ENCODE measurements at regions of chr4 and their contacts with region 1.

Region 1: DNA sequence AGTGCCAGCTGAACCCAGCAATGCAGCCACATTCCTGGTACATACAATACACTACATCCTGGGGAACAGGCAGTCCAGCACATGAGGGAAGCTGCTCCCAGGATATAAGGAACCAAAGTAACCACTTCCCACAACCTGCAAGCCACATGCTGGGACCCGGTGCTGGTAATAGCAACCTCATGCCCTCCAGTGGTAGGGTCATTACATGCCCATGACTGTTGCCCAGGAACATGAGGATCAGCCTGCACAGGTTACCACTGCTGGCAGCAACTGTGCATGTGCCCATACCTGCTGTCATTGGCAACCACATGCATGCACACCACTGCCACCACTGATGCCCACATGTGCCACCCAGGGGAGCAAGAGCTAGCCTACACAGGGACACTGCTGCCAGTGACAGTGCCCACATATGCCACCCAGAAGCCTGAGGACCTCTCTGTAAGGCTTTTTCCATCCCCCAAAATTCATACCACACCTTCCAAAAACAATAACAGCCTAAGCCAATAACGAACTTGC is 1982.5 kb downstream of the ARAP2 start:
- DNase-seq: peak; percentile 6
- H3K4me3 ChIP-seq: no peak overlapping the region
- H3K27ac ChIP-seq: no peak overlapping the region
- H3K4me1 ChIP-seq: no peaks in the 10 kb centered on the region
- H3K27me3 ChIP-seq: no peaks in the 10 kb centered on the region
- CTCF ChIP-seq: peak in 1 of 2 donors; percentile 16

Region 2: DNA sequence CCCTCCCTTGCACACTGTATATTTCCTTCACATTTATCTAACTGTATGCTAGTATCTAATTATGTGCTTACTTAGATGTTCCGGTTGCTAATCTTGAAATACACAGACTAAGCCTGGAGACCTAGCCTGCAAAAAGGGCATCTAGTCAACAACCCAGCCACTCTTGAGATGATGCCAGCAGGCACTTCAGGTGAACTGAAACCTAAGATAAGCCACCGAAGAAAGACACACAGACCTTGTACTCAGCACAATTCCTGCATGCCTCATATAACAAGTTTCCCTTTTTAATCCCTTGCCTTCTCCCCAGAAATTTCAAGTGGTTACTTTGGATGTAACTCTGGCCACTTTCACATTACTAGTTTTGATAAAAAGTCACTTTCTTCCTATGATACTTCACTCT is 524.1 kb before region 1 on chr4:
- CTCF ChIA-PET with region 1: no interaction called
- dilution Hi-C with region 1: no loop called
- in situ Hi-C with region 1: no loop called
- intact Hi-C with region 1: no loop called
- DNase-seq: no peak
- H3K4me3 ChIP-seq: no peak overlapping the region
- H3K27ac ChIP-seq: no peak overlapping the region
- H3K4me1 ChIP-seq: no peaks in the 10 kb centered on the region
- H3K27me3 ChIP-seq: no peaks in the 10 kb centered on the region
- CTCF ChIP-seq: no peak

Region 3: GRCh38 chr4:34138385-34138784 is 123.5 kb before region 1 on chr4:
- CTCF ChIA-PET with region 1: no interaction called
- dilution Hi-C with region 1: no loop called
- in situ Hi-C with region 1: no loop called
- intact Hi-C with region 1: loop called (anchors 10 kb)
- DNase-seq: no peak
- H3K4me3 ChIP-seq: no peak overlapping the region
- H3K27ac ChIP-seq: no peak overlapping the region
- H3K4me1 ChIP-seq: no peaks in the 10 kb centered on the region
- H3K27me3 ChIP-seq: no peaks in the 10 kb centered on the region
- CTCF ChIP-seq: no peak

Region 4: DNA sequence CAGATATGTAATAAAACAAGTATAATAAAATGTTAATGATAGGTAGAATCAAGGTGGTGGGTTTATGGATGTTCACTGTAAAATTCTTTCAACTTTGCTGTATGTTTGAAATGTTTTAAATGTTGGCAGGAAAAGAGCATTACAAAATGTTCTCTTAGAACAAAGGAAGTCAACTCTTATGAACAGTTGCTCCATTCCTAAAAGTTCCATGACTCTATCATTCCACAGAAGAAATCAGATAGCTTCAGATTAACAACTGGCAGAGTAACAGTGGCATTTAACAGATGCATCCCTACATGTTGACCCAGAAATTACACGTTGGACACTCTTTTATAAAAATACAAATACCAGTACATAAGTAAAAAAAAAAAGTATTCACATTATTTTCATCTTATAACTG is 41.3 kb before region 1 on chr4:
- CTCF ChIA-PET with region 1: no interaction called
- dilution Hi-C with region 1: no loop called
- in situ Hi-C with region 1: no loop called
- intact Hi-C with region 1: no loop called
- DNase-seq: no peak
- H3K4me3 ChIP-seq: no peak overlapping the region
- H3K27ac ChIP-seq: no peak overlapping the region
- H3K4me1 ChIP-seq: no peaks in the 10 kb centered on the region
- H3K27me3 ChIP-seq: no peaks in the 10 kb centered on the region
- CTCF ChIP-seq: no peak

Region 5: DNA sequence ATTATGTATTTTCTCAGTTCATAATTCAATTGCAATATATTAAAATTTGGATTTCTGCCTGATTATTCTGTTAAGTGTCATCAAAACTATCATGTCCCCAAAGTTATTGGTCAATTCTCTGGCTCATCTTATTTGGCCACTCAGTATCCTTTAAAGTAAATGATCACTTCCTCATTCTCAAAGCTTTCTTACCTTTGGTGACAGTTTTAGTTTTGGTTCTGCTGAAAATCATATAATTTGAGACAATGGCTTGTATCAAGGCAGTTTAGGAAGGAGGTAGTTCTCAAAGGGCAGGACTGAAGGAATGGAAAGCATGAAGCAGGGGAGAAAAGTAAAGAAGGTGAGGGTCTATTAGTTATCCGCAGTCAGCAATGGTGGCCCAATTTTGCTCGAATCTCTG is 150.4 kb after region 1 on chr4:
- CTCF ChIA-PET with region 1: no interaction called
- dilution Hi-C with region 1: no loop called
- in situ Hi-C with region 1: no loop called
- intact Hi-C with region 1: no loop called
- DNase-seq: no peak
- H3K4me3 ChIP-seq: no peak overlapping the region
- H3K27ac ChIP-seq: no peak overlapping the region
- H3K4me1 ChIP-seq: no peaks in the 10 kb centered on the region
- H3K27me3 ChIP-seq: peaks cover 1% of the 10 kb centered on the region
- CTCF ChIP-seq: no peak

Region 6: GRCh38 chr4:34422472-34423175 is 160.8 kb after region 1 on chr4:
- CTCF ChIA-PET with region 1: no interaction called
- dilution Hi-C with region 1: no loop called
- in situ Hi-C with region 1: no loop called
- intact Hi-C with region 1: no loop called
- DNase-seq: no peak
- H3K4me3 ChIP-seq: no peak overlapping the region
- H3K27ac ChIP-seq: no peak overlapping the region
- H3K4me1 ChIP-seq: no peaks in the 10 kb centered on the region
- H3K27me3 ChIP-seq: no peaks in the 10 kb centered on the region
- CTCF ChIP-seq: no peak